ENCODE measurements at regions of chr2 and their contacts with region 1.

Region 1: GRCh38 chr2:169265591-169265990 is 96.7 kb downstream of the LRP2 start:
- DNase-seq: no peak
- H3K4me3 ChIP-seq: no peak overlapping the region
- H3K27ac ChIP-seq: no peak overlapping the region
- H3K4me1 ChIP-seq: no peaks in the 10 kb centered on the region
- H3K27me3 ChIP-seq: no peaks in the 10 kb centered on the region
- CTCF ChIP-seq: no peak
- POLR2A ChIP-seq: no peak

Region 2: GRCh38 chr2:169050478-169051240 is 214.9 kb before region 1 on chr2:
- CTCF ChIA-PET with region 1: no interaction called
- POLR2A ChIA-PET with region 1: no interaction called
- dilution Hi-C with region 1: no loop called
- intact Hi-C with region 1: no loop called
- DNase-seq: peak; percentile 44
- H3K4me3 ChIP-seq: no peak overlapping the region
- H3K27ac ChIP-seq: peak overlapping the region; percentile 2
- H3K4me1 ChIP-seq: peaks cover 5% of the 10 kb centered on the region
- H3K27me3 ChIP-seq: no peaks in the 10 kb centered on the region
- CTCF ChIP-seq: no peak
- POLR2A ChIP-seq: no peak

Region 3: DNA sequence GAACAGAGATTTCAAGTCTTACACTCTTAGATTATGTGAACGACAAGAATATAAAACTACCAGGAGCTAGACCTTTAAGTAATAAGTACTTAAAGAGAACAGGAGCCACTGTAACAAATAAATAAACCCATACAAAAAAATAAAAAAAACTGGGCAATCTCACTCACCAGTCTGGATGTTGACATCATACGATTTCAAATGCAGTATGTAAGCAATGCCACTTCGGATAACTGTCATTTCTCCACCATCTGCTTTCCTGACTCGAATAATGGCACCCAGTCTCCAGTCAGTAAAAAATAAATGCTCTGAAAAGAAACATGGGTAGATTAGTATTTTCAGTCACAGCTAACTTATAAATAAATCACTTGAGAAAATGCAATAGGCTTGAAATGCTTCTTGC is 18.4 kb before region 1 on chr2:
- CTCF ChIA-PET with region 1: no interaction called
- POLR2A ChIA-PET with region 1: no interaction called
- dilution Hi-C with region 1: no loop called
- intact Hi-C with region 1: no loop called
- DNase-seq: no peak
- H3K4me3 ChIP-seq: no peak overlapping the region
- H3K27ac ChIP-seq: no peak overlapping the region
- H3K4me1 ChIP-seq: no peaks in the 10 kb centered on the region
- H3K27me3 ChIP-seq: no peaks in the 10 kb centered on the region
- CTCF ChIP-seq: no peak
- POLR2A ChIP-seq: no peak

Region 4: DNA sequence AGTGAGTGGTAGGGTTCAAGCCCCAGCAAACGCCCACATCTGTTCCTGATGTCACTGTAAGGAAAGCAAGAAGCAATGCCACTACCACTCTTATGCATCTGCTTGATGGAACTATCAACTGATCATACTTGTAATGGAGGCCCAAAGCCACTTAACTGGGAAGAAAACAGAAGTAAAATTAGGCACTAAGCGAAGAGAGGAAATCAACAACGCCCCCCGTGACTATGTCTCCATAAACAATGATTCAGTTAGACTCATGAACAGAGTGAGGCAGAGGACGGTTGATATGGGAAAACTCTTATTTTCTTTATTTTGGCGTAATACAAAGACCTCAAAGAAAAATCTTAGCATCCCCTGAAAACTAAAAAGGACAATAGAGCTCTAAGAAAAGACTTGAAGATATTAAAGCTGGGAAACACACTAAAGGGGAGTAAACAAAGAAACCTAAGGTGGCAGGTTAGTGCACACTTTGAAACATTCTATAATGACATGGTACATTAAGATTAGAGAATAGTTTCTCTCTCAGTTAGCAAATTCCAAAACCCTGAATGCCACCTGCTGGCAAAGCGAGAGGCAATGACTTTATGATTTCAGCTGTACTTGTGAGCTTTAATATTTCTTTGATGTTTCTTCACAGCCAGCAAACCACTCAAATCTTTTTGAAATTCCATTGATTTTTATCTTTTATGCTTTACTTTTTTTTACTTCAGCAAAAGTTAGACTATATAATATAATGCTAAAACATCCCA is 10.3 kb after region 1 on chr2:
- CTCF ChIA-PET with region 1: interaction called, 17 read pairs
- POLR2A ChIA-PET with region 1: no interaction called
- dilution Hi-C with region 1: no loop called
- intact Hi-C with region 1: no loop called
- DNase-seq: peak; percentile 10
- H3K4me3 ChIP-seq: no peak overlapping the region
- H3K27ac ChIP-seq: no peak overlapping the region
- H3K4me1 ChIP-seq: no peaks in the 10 kb centered on the region
- H3K27me3 ChIP-seq: peaks cover 0 to 2% of the 10 kb centered on the region in 2 experiments
- CTCF ChIP-seq: peak; percentile 10 to 11
- POLR2A ChIP-seq: no peak

Region 5: GRCh38 chr2:169300636-169301530 is 35.3 kb after region 1 on chr2:
- CTCF ChIA-PET with region 1: no interaction called
- POLR2A ChIA-PET with region 1: no interaction called
- dilution Hi-C with region 1: no loop called
- intact Hi-C with region 1: no loop called
- DNase-seq: no peak
- H3K4me3 ChIP-seq: no peak overlapping the region
- H3K27ac ChIP-seq: no peak overlapping the region
- H3K4me1 ChIP-seq: no peaks in the 10 kb centered on the region
- H3K27me3 ChIP-seq: no peaks in the 10 kb centered on the region
- CTCF ChIP-seq: no peak
- POLR2A ChIP-seq: no peak